ENCODE measurements at regions of chr3 and their contacts with region 1.

Region 1: GRCh38 chr3:9809615-9810432 is at the start of gene TTLL3:
- DNase-seq: peak; percentile 65 to 71
- H3K4me3 ChIP-seq: peak within 1 kb of the TSS; percentile 61
- H3K4me3 Mint-ChIP-seq: peak within 1 kb of the TSS; percentile 47
- H3K27ac Mint-ChIP-seq: peak within 1 kb of the TSS; percentile 87
- H3K4me1 ChIP-seq: peaks cover 12% of the 10 kb centered on the region
- H3K4me1 Mint-ChIP-seq: peaks cover 6% of the 10 kb centered on the region
- H3K27me3 ChIP-seq: no peaks in the 10 kb centered on the region
- H3K27me3 Mint-ChIP-seq: no peaks in the 10 kb centered on the region
- CTCF ChIP-seq: no peak
- total RNA-seq, gene TTLL3: 10.3 and 13.3 TPM in 2 replicates

Region 2: DNA sequence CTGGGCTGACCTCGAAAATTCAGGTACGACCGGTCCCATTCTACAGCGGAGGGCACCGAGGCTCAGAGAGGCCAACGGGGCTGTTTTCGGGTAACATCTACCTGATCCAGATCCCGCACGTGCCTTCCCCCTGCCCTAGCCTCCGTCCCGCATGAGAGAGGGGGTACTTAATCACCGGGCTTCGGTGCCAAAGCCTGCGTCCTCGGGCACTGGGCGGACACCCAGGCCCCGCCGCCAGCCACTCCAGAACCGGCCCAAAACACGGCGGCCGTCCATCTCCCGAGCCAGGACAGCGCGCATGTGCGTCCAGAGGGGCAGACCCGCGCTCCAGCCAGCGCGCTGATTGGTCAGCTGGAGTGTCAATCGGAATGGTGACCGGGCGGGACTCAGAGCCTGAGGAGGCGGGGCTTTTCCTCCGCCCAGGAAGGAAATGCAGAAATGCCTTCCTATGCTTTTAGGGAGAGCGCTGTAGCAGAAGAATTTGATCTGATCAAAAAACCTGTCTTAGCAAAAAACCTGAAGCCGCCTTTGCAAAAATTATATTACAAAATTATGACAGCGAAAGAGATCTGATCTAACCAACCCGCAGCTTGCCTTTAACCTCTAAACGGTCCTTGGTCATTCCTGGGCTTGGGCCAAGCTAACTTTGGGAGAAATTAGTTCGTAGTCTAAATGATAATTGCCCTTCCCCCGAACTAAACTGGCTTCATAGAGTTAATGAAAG is 34.1 kb after region 1 on chr3 and contains the start of gene RPUSD3:
- CTCF ChIA-PET with region 1: no interaction called
- POLR2A ChIA-PET with region 1: no interaction called
- intact Hi-C with region 1: loop called (anchors 2 kb)
- DNase-seq: peak; percentile 96 to 98
- H3K4me3 ChIP-seq: peak within 1 kb of the TSS; percentile 79
- H3K4me3 Mint-ChIP-seq: peak within 1 kb of the TSS; percentile 99
- H3K27ac Mint-ChIP-seq: peak within 1 kb of the TSS; percentile 94
- H3K4me1 ChIP-seq: peaks cover 20% of the 10 kb centered on the region
- H3K4me1 Mint-ChIP-seq: peaks cover 14% of the 10 kb centered on the region
- H3K27me3 ChIP-seq: no peaks in the 10 kb centered on the region
- H3K27me3 Mint-ChIP-seq: no peaks in the 10 kb centered on the region
- CTCF ChIP-seq: no peak
- total RNA-seq, gene RPUSD3: 54.8 and 61.8 TPM in 2 replicates